Activated CD8-positive, alpha-beta T cell treated with anti-CD3 and anti-CD28 coated beads, Interleukin-2, amount 10 ng/mL, durations not matched to agents 7 days and 5 days (primary cell): ENCODE measurements at regions of chr2 and their contacts with region 1.

Region 1: DNA sequence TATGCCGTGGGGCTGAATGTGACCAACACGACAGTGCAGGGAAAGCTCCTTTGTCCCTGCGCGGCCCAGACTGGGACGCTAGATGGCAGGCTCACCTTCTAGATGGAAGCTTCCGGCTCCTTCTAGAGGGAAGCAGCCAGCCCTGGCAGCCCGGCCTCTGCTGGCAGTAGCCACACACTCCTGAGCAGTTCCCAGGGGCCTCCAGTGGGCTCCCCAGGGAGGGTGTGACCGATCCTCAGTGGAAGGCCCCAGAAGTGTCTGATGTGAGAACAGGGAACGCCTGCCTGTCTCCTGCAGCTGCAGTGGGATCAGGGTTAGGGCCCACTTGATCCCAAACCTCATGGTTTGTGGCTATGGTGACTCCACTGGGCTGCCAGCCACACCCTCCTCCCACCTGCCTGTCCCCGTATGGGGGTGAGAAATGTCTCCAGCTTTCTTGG is 48.5 kb upstream of the LRPPRC start:
- DNase-seq: peak; percentile 88
- ATAC-seq: peak; percentile 100
- H3K4me3 Mint-ChIP-seq: no peak overlapping the region
- H3K27ac Mint-ChIP-seq: no peak overlapping the region
- H3K4me1 Mint-ChIP-seq: peaks cover 6% of the 10 kb centered on the region
- H3K27me3 Mint-ChIP-seq: no peaks in the 10 kb centered on the region

Region 2: DNA sequence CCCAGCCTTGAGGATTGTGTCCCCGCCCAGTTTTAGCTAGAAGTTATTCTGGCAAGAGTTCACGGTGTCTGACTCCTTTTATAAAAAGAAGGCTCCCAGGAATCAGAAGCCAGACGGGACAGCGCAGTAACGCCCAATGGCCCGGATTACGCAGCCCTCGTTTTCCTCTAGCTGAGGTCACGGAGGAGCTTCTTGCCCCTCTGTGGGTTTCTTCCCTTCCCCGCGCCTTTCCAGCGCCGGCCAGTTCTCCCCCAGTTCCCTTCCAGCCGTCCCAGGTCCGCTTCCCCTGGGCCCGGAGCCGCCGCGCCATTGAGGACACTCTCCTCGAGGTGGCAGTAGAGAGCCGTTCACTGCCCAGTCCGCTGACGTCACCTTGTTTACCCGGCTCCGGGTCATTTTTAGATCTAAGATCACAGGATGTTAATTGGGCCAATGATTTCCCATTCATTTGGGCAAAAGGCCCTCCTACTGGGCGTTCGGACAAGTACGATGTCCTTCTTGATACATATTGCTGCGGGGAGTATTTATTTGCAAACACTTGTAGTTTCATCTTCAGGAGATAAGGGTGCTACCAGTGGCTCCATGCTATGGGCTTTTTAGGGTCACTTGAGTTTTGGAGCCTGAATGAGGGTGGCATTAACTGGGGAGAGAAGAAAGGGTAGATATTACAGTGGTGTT is 42.9 kb after region 1 on chr2:
- CTCF ChIA-PET with region 1: interaction called, 10 read pairs
- POLR2A ChIA-PET with region 1: no interaction called
- DNase-seq: peak; percentile 88
- ATAC-seq: peak; percentile 90
- H3K4me3 Mint-ChIP-seq: peak overlapping the region; percentile 77
- H3K27ac Mint-ChIP-seq: peak overlapping the region; percentile 84
- H3K4me1 Mint-ChIP-seq: peaks cover 28% of the 10 kb centered on the region
- H3K27me3 Mint-ChIP-seq: no peaks in the 10 kb centered on the region

Region 3: DNA sequence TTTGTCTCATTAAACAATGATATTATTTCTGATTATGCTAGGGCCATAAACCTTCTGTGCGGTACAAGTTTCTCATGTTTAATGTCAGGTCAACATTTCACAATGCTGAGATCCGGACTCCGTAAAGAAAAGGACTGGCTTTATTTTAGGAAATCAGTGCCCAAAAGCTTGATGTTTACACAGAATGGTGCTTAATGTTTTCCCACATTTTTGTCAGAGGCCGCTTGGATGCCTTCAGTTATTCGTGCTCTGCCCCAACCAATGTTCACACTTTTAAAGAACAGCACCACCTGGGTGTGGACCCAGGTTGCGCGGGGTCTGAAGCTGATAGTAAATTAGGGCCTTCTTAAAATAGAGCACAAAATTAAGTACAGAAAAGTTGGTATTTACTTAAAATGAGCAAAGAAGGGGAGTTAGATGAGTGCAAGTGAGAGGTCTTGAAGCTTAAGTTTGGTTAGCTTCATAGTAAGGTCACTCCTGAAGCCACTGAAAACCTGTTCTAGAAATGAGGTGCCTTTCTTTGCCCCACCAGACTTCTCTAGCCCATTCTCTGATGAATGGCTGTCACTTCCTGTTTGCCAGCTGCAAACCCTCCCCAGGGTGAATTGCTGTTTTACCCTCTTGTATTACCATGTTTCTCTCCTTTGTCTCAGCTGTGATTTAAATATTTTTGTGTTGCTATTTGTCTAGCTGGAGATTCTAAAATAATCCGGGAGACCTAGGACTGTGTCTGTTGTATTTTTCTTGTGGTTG is 251.5 kb after region 1 on chr2:
- CTCF ChIA-PET with region 1: interaction called, 11 read pairs
- POLR2A ChIA-PET with region 1: no interaction called
- DNase-seq: no peak
- ATAC-seq: no peak
- H3K4me3 Mint-ChIP-seq: no peak overlapping the region
- H3K27ac Mint-ChIP-seq: no peak overlapping the region
- H3K4me1 Mint-ChIP-seq: peaks cover 10% of the 10 kb centered on the region
- H3K27me3 Mint-ChIP-seq: peaks cover 9% of the 10 kb centered on the region

Region 4: DNA sequence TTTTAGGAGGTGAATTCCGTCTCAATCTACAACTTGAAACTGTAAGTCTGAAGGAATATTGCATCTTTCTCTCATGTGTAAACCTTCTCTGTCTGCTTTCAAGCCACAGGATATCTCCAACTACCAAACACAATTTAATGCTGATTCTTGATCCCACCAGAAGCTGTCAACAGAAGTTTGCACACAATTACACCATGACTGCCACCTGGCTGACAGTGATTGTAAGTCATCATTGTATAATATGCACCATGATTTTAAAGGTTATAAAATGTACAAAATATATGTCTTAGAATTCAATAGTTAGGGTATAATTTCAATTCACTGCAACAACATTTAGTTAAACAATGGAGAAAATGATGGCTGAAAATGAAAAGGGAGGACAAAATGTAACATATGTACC is 298.6 kb after region 1 on chr2:
- CTCF ChIA-PET with region 1: interaction called, 22 read pairs
- POLR2A ChIA-PET with region 1: no interaction called
- DNase-seq: peak; percentile 46
- ATAC-seq: no peak
- H3K4me3 Mint-ChIP-seq: no peak overlapping the region
- H3K27ac Mint-ChIP-seq: no peak overlapping the region
- H3K4me1 Mint-ChIP-seq: no peaks in the 10 kb centered on the region
- H3K27me3 Mint-ChIP-seq: no peaks in the 10 kb centered on the region

Region 5: DNA sequence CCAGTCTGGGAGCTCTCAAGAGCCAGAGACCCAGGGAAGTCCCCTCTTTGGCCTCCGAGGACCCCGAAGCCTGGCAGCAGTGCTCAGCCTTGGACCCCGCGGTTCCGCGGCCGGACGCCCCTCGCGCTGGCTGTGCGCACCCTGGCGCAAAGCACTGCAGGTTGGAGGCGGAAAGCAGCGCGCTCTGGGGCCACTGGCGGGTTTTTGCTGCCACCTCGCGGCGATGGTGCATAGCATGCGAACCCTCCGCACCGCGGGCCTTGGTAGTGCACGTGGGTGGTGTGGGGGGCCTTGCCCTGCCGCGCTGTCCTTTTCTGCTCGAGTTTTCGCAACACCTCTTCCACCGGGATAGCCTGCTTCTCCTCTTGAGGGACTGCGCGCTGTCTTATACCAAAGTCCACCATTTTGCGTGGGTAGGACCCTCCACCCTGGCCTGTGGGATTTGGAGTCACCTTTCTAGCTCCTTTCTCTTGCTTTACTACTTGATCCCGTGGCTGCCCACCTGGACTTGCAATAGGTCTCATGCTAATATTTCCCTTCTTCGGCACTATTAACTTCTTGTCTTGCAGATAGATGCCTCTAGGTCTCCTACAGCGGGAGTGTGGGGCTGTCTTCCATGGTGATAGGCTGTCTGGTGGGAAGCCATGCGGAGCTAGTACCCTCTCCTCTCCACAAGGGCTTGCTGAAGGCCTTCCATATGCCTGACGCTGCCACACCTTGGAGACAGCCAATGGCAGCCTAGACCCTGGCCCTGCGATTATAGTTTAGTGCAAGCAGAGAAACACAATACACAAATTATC is 911.5 kb after region 1 on chr2:
- CTCF ChIA-PET with region 1: interaction called, 16 read pairs
- POLR2A ChIA-PET with region 1: no interaction called
- DNase-seq: peak; percentile 81
- ATAC-seq: peak; percentile 86
- H3K4me3 Mint-ChIP-seq: peak overlapping the region; percentile 9
- H3K27ac Mint-ChIP-seq: no peak overlapping the region
- H3K4me1 Mint-ChIP-seq: peaks cover 22% of the 10 kb centered on the region
- H3K27me3 Mint-ChIP-seq: peaks cover 59% of the 10 kb centered on the region